GM12878 (cell line): ENCODE measurements at regions of chr1 and their contacts with region 1.

Region 1: DNA sequence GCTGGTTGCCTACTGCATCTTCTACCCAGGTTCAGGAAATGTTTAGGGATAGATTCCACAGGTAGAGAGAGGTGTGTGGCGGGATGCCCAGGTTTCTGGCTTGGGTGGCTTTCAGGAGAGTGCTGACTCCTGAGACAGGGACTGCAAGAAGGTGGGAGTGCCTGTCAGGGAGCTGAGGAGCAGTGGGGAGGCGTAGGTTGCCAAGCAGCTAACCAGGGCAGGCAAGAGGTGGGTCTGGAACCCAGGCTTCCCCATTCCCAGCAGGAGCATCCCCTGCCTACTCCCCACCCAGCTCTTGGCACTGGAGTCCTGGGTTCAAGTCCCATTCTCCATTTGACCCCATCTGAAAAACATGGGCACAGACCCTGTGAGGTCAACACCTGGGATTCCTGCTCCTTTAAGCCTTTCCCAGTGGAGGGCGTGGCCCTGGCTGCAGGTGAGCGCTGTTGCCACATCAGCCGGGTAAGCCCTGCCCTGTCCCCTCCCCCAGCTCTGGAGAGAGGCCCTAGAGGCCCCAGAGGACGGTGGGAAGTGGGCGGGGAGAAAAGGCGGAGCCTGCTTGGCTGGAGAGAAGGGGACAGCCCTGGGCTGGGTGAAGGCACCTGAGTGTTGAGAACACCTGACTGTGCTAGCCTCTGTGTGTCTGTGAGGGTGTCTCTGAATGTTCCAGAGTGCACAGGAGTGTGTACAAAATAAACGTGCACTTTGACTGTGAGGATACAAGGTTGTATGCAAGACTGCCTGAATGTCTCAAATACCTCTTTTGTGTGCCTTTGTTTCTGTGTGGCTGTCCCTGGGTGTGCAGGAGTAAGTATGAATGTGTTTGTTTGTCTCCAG is 14.0 kb upstream of the SYNC start:
- DNase-seq: no peak
- ATAC-seq: peak; percentile 87
- H3K4me3 ChIP-seq: no peak overlapping the region
- H3K27ac ChIP-seq: no peak overlapping the region
- H3K4me1 ChIP-seq: 0 out of 2 replicates have a peak, but pooled peaks cover 4% of the 10 kb centered on the region
- H3K27me3 ChIP-seq: no peaks in the 10 kb centered on the region
- CTCF ChIP-seq: no peak
- EP300 ChIP-seq: no peak
- POLR2A ChIP-seq: no peak
- RAD21 ChIP-seq: no peak

Region 2: GRCh38 chr1:32521165-32521564 is 195.4 kb before region 1 on chr1:
- CTCF ChIA-PET with region 1: interaction called, 39 read pairs
- POLR2A ChIA-PET with region 1: no interaction called
- RAD21 ChIA-PET with region 1: interaction called, 10 read pairs
- SMC1A ChIA-PET with region 1: interaction called, 12 read pairs
- in situ Hi-C with region 1: no loop called
- intact Hi-C with region 1: loop called (anchors 5 kb)
- DNase-seq: no peak
- ATAC-seq: peak; percentile 14
- H3K4me3 ChIP-seq: peak overlapping the region; percentile 50; the same call in 1 of the 2 replicates
- H3K27ac ChIP-seq: no peak overlapping the region
- H3K4me1 ChIP-seq: peaks cover 9% of the 10 kb centered on the region
- H3K27me3 ChIP-seq: no peaks in the 10 kb centered on the region
- CTCF ChIP-seq: 0 out of 6 replicates have a peak, but pooled peaks of 1 of the 3 experiments have one; percentile 14
- EP300 ChIP-seq: no peak
- POLR2A ChIP-seq: no peak
- RAD21 ChIP-seq: 0 out of 2 replicates have a peak, but pooled peaks have one; percentile 29

Region 3: GRCh38 chr1:32557812-32558211 is 158.7 kb before region 1 on chr1:
- CTCF ChIA-PET with region 1: no interaction called
- POLR2A ChIA-PET with region 1: no interaction called
- RAD21 ChIA-PET with region 1: no interaction called
- SMC1A ChIA-PET with region 1: no interaction called
- in situ Hi-C with region 1: no loop called
- intact Hi-C with region 1: no loop called
- DNase-seq: no peak
- ATAC-seq: no peak
- H3K4me3 ChIP-seq: no peak overlapping the region
- H3K27ac ChIP-seq: no peak overlapping the region
- H3K4me1 ChIP-seq: no peaks in the 10 kb centered on the region
- H3K27me3 ChIP-seq: no peaks in the 10 kb centered on the region
- CTCF ChIP-seq: no peak
- EP300 ChIP-seq: no peak
- POLR2A ChIP-seq: no peak
- RAD21 ChIP-seq: no peak

Region 4: DNA sequence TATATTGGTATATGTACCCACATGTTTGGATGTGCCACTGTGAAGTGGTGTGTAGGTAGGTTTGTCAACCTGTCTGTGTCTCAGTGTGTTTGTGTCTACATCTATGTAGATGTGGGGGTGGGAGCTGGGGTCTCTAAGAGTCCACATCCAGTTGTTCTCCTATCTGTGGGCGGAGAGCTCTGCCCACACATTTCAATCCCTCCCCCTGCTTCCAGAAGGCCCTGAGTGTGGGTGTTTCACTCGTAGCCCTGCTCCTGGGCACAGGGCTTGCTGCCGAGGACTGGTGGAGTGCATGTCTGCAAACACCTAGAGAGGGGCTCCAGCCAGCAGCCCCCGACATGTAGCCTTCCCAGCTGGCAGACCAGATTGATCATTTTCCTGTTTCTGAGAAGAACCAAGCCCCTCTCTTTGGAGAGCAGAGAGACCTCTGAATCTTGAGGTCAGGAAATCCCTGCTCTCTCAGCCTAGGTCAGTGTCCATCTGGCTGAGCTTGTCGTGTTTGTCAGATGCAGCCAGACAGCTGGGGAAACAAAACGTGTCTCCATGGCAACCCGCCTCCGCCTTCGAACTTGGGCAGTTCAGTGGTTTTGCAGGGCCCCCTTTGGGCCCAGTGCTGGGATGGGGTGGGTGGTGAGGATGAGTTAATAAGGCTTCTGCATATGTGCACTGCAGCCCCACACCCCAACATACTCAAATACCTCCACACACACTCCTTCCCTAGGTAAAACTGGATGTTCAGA is 17.2 kb after region 1 on chr1:
- CTCF ChIA-PET with region 1: interaction called, 10 read pairs
- POLR2A ChIA-PET with region 1: interaction called, 4 read pairs
- RAD21 ChIA-PET with region 1: interaction called, 10 read pairs
- SMC1A ChIA-PET with region 1: interaction called, 8 read pairs
- in situ Hi-C with region 1: no loop called
- intact Hi-C with region 1: no loop called
- DNase-seq: no peak
- ATAC-seq: peak; percentile 84
- H3K4me3 ChIP-seq: no peak overlapping the region
- H3K27ac ChIP-seq: no peak overlapping the region
- H3K4me1 ChIP-seq: peaks cover 7% of the 10 kb centered on the region
- H3K27me3 ChIP-seq: no peaks in the 10 kb centered on the region; a peak in 1 of 4 replicates
- CTCF ChIP-seq: peak in 1 of 3 experiments; percentile 2; a peak in 1 of 6 replicates
- EP300 ChIP-seq: 0 out of 4 replicates have a peak, but pooled peaks of 1 of the 2 experiments have one; percentile 27
- POLR2A ChIP-seq: no peak
- RAD21 ChIP-seq: no peak

Region 5: GRCh38 chr1:32761253-32761880 is 44.8 kb after region 1 on chr1:
- CTCF ChIA-PET with region 1: interaction called, 24 read pairs
- POLR2A ChIA-PET with region 1: no interaction called
- RAD21 ChIA-PET with region 1: interaction called, 7 read pairs
- SMC1A ChIA-PET with region 1: interaction called, 4 read pairs
- in situ Hi-C with region 1: no loop called
- intact Hi-C with region 1: no loop called
- DNase-seq: peak; percentile 26
- ATAC-seq: peak; percentile 75
- H3K4me3 ChIP-seq: no peak overlapping the region
- H3K27ac ChIP-seq: no peak overlapping the region
- H3K4me1 ChIP-seq: peaks cover 14% of the 10 kb centered on the region
- H3K27me3 ChIP-seq: no peaks in the 10 kb centered on the region; a peak in 1 of 4 replicates
- CTCF ChIP-seq: no peak
- EP300 ChIP-seq: no peak
- POLR2A ChIP-seq: no peak
- RAD21 ChIP-seq: no peak

Region 6: DNA sequence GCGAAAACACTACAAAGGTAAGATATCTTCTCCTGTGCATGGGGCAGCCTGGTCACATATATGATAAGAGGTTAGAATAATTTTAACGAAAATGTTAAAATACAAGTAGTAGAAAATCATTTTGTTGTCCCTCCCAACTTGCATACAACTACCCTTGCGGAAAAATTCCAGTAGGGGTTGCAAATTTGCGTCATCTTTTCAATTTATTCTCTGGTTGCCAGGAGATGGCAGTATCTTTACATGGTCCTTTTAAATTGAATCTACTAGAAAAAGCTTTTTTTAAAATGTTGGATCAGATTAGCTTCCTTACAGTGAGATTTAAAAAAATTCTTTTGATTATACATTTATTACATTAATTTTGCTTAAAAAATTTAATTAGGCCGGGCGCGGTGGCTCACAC is 111.8 kb after region 1 on chr1:
- CTCF ChIA-PET with region 1: interaction called, 11 read pairs
- POLR2A ChIA-PET with region 1: no interaction called
- RAD21 ChIA-PET with region 1: interaction called, 3 read pairs
- SMC1A ChIA-PET with region 1: interaction called, 6 read pairs
- in situ Hi-C with region 1: no loop called
- intact Hi-C with region 1: no loop called
- DNase-seq: no peak
- ATAC-seq: no peak
- H3K4me3 ChIP-seq: no peak overlapping the region
- H3K27ac ChIP-seq: no peak overlapping the region
- H3K4me1 ChIP-seq: no peaks in the 10 kb centered on the region
- H3K27me3 ChIP-seq: no peaks in the 10 kb centered on the region
- CTCF ChIP-seq: peak in 1 of 3 experiments; percentile 20; a peak in 1 of 6 replicates
- EP300 ChIP-seq: no peak
- POLR2A ChIP-seq: no peak
- RAD21 ChIP-seq: 0 out of 2 replicates have a peak, but pooled peaks have one; percentile 18

Region 7: GRCh38 chr1:32870615-32871363 is 154.3 kb after region 1 on chr1 and contains the start of gene FNDC5:
- CTCF ChIA-PET with region 1: interaction called, 57 read pairs
- POLR2A ChIA-PET with region 1: interaction called, 4 read pairs
- RAD21 ChIA-PET with region 1: interaction called, 34 read pairs
- SMC1A ChIA-PET with region 1: interaction called, 16 read pairs
- in situ Hi-C with region 1: no loop called
- intact Hi-C with region 1: loop called (anchors 1 kb)
- DNase-seq: no peak
- ATAC-seq: peak; percentile 21; the same call in 1 of the 3 replicates
- H3K4me3 ChIP-seq: no peak within 1 kb of the TSS
- H3K27ac ChIP-seq: no peak within 1 kb of the TSS
- H3K4me1 ChIP-seq: peaks cover 4% of the 10 kb centered on the region
- H3K27me3 ChIP-seq: peaks cover 9 to 12% of the 10 kb centered on the region in 2 experiments; a peak in 3 of 4 replicates
- CTCF ChIP-seq: no peak
- EP300 ChIP-seq: no peak
- POLR2A ChIP-seq: no peak
- RAD21 ChIP-seq: no peak
- polyA plus RNA-seq, gene FNDC5: 0.14 to 0.26 TPM